AG04450 (cell line): ENCODE measurements at regions of chr9 and their contacts with region 1.

Region 1: DNA sequence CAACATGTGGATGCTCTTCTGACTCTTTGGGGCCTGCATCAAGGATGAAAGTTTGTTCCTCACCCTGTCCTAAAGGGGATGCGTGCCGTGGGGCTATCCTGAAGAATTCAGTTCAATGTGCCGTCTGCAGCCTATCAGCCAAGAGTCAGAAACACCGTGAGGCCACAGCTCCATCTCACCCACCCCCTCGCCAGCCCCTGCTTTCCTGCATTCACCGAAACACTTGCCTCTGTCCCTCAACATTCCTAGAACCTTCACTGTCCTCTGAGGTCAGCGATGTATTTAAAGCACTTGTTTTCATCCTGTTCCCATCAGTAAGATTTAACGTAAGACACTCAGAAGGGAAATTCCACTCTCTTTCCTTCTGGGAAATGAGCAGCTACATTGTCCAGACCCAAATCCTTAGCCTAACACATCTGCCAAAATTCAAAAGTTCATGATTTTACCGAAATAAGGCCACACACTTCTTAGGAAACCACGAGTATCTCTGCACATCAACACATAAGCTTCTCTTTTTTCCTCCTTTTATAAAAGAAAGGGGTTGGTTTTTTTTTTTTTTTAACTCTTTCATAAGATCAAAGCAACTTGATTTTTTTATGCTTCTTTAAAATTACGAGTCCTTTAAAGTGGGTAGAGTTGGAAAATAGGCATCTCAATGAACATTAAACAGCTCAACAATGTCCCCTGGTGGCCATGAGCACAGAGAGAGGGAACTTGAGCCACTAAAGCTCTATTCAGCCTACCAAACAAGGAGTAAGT is 100.7 kb downstream of the SUSD1 start:
- DNase-seq: peak; percentile 87
- H3K4me3 ChIP-seq: no peak overlapping the region
- H3K27ac ChIP-seq: peak overlapping the region; percentile 94
- H3K27me3 ChIP-seq: no peaks in the 10 kb centered on the region
- CTCF ChIP-seq: peak; percentile 98

Region 2: DNA sequence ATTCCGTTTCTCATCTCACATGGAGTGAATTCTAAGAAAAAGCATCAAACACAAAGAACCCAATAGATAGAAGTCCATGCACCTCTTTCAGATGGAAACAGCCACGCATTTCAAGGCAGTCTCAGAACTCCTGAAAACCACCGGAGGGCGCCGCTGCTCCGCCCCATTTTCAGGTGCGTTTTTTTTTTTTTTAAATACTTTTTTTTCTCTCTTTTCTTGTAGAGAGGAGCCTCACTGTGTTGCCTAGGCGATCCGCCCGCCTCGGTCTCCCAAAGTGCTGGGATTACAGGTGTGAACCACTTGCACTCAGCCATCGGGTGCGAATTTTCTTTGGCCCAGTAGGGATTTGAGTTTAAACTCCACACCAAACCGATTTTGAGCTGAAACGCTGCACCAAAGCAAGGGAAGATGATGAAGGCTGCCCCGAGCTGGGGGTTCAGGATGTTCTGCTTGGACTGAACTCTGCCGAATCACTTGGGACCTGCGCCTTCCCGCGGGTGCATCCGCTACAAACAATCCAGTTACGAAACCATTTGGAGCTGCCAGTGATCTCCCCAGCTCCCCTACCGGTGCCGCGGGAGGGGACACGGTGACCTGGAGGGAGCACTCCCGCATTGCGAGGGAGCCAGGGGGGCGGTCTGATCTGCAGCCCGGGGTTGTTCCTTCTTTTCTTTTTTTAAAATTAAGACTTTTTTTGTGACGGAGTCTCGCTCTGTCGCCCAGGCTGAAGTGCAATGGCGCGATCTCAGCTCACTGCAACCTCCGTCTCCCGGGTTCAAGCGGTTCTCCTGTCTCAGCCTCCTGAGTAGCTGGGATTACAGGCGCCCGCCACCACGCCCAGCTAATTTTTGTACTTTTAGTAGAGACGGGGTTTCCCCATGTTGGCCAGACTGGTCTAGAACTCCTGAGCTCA is 476.4 kb before region 1 on chr9:
- CTCF ChIA-PET with region 1: interaction called, 10 read pairs
- POLR2A ChIA-PET with region 1: interaction called, 5 read pairs
- DNase-seq: no peak
- H3K4me3 ChIP-seq: peak overlapping the region; percentile 73
- H3K27ac ChIP-seq: peak overlapping the region; percentile 88
- H3K27me3 ChIP-seq: no peaks in the 10 kb centered on the region
- CTCF ChIP-seq: peak; percentile 69

Region 3: GRCh38 chr9:111766066-111766465 is 308.4 kb before region 1 on chr9:
- CTCF ChIA-PET with region 1: interaction called, 219 read pairs
- POLR2A ChIA-PET with region 1: no interaction called
- DNase-seq: no peak
- H3K4me3 ChIP-seq: no peak overlapping the region
- H3K27ac ChIP-seq: no peak overlapping the region
- H3K27me3 ChIP-seq: no peaks in the 10 kb centered on the region
- CTCF ChIP-seq: no peak

Region 4: DNA sequence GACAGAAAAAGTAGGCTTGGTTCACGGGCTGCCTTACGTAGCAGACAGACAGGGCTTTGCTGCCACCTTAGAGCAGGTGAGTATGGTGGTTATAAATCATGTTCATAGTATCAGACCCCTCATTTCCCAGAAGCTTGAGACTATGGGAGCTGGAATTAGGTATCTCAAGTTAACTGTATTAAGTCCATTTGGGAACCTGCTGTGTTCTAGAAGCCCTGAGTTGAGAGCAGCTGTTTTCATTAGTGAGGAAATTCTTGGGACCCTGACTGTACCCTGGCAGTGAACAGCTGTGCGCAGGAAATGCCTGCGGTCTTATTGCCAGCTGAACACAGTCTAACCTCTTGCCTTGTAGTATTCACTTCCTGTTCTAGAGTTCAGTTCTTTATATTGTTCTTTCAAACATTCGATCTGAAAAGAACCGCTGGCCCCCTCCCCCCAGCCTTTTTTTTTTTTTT is 148.0 kb before region 1 on chr9:
- CTCF ChIA-PET with region 1: interaction called, 12 read pairs
- POLR2A ChIA-PET with region 1: no interaction called
- DNase-seq: no peak
- H3K4me3 ChIP-seq: no peak overlapping the region
- H3K27ac ChIP-seq: no peak overlapping the region
- H3K27me3 ChIP-seq: no peaks in the 10 kb centered on the region
- CTCF ChIP-seq: no peak

Region 5: GRCh38 chr9:112041536-112042243 is 32.7 kb before region 1 on chr9:
- CTCF ChIA-PET with region 1: interaction called, 6 read pairs
- POLR2A ChIA-PET with region 1: interaction called, 20 read pairs
- DNase-seq: peak; percentile 99
- H3K4me3 ChIP-seq: no peak overlapping the region
- H3K27ac ChIP-seq: peak overlapping the region; percentile 95
- H3K27me3 ChIP-seq: no peaks in the 10 kb centered on the region
- CTCF ChIP-seq: no peak